ENCODE measurements at regions of chr19 and their contacts with region 1.

Region 1: GRCh38 chr19:6632002-6632621 is 37.8 kb downstream of the TNFSF14 start:
- DNase-seq: peak; percentile 25 to 79
- ATAC-seq: peak; percentile 71 to 80; a peak in 5 of 6 replicates
- H3K4me3 ChIP-seq: no peak overlapping the region
- H3K27ac ChIP-seq: no peak overlapping the region
- H3K4me1 ChIP-seq: no peaks in the 10 kb centered on the region
- CTCF ChIP-seq: peak; percentile 71
- EP300 ChIP-seq: no peak
- POLR2A ChIP-seq: no peak
- RAD21 ChIP-seq: peak; percentile 55 to 73; a peak in 4 of 5 replicates

Region 2: DNA sequence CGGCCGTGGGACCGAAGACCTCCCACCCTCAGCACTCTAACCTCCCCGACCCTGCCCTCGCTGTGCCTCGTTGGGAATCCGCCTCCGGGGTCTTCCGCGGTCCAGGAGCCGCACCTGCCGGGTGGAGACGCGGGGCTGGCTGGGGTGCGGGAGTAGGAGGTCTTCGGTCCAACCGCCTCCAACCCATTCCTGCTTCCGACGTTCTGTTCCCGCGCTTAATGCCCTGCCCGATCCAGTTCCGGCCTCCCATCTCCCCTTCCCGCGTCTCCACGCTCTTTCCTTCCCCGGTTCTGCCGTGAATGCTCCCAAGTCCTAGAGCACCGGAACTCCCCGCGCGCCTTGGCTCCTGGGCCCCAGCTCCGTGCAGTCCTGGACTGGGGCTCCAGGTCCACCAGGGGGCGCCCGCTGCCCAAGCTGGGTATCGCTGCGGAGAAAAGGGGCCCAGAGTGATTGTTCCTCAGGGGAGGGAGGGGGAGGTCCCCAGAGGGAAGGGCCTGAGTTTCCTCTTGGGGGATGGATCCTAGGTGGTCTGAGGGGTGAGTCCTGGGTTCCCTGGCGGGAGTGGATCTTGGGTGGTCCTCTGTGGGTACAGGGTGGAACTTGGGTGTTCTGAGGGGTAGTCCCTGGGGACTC is 115.3 kb before region 1 on chr19:
- CTCF ChIA-PET with region 1: interaction called, 14 read pairs
- POLR2A ChIA-PET with region 1: no interaction called
- DNase-seq: peak; percentile 83 to 84
- ATAC-seq: peak; percentile 79 to 93
- H3K4me3 ChIP-seq: peak overlapping the region; percentile 58
- H3K27ac ChIP-seq: peak overlapping the region; percentile 51 to 93
- H3K4me1 ChIP-seq: peaks cover 46% of the 10 kb centered on the region
- CTCF ChIP-seq: peak; percentile 90
- EP300 ChIP-seq: no peak
- POLR2A ChIP-seq: no peak
- RAD21 ChIP-seq: peak; percentile 94

Region 3: DNA sequence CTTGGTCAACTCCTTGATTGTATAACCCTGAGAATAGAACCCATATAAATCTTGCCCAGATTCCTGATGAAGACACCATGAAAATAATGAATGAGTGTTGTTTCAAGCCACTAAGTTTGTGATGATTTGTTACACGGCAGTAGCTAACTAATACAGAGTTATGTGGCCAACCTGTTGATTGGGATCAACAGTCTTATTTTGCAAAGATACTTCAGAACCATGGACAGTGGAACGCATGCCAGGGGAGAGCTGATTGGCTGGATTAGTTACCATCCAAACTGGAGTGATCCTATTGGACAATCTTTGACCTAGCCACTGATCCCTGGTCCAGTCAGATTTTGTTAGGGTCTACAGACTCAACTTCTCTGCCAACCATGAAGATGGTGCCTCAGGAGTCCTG is 67.7 kb before region 1 on chr19:
- CTCF ChIA-PET with region 1: interaction called, 14 read pairs
- POLR2A ChIA-PET with region 1: no interaction called
- DNase-seq: peak in 1 of 2 experiments; percentile 33
- ATAC-seq: no peak
- H3K4me3 ChIP-seq: no peak overlapping the region
- H3K27ac ChIP-seq: no peak overlapping the region
- H3K4me1 ChIP-seq: peaks cover 16% of the 10 kb centered on the region
- CTCF ChIP-seq: no peak
- EP300 ChIP-seq: no peak
- POLR2A ChIP-seq: no peak
- RAD21 ChIP-seq: no peak

Region 4: DNA sequence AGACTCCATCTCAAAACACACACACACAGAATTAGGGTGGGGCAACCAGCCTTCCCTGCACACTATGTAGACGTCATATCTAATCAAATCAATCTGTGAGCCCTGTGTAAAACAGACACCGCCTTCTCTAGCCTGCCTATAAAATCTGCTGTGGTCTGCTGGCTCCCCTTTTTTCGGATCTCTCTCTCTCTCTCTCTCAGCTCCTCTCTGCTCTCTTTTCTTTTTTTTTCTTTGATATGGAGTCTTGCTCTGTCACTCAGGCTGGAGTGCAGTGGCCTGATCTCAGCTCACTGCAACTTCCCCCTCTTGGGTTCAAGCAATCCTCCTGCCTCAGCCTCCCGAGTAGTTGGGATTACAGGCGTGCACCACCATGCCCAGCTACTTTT is 29.4 kb before region 1 on chr19:
- CTCF ChIA-PET with region 1: interaction called, 13 read pairs
- POLR2A ChIA-PET with region 1: no interaction called
- DNase-seq: no peak
- ATAC-seq: no peak
- H3K4me3 ChIP-seq: no peak overlapping the region
- H3K27ac ChIP-seq: no peak overlapping the region
- H3K4me1 ChIP-seq: no peaks in the 10 kb centered on the region; the same call in 1 of the 3 replicates
- CTCF ChIP-seq: no peak
- EP300 ChIP-seq: no peak
- POLR2A ChIP-seq: no peak
- RAD21 ChIP-seq: no peak

Measured in A549 (cell line).